Breast epithelium (tissue), 4 donors: ENCODE measurements at regions of chr2 and their contacts with region 1.

Region 1: GRCh38 chr2:73114273-73114867 is 1.6 kb upstream of the RAB11FIP5 start:
- DNase-seq: no peak
- H3K4me3 ChIP-seq: no peak overlapping the region
- H3K27ac ChIP-seq: no peak overlapping the region
- H3K4me1 ChIP-seq: peaks cover 0 to 12% of the 10 kb centered on the region in 2 donors
- H3K27me3 ChIP-seq: no peaks in the 10 kb centered on the region
- CTCF ChIP-seq: no peak
- POLR2A ChIP-seq: no peak

Region 2: DNA sequence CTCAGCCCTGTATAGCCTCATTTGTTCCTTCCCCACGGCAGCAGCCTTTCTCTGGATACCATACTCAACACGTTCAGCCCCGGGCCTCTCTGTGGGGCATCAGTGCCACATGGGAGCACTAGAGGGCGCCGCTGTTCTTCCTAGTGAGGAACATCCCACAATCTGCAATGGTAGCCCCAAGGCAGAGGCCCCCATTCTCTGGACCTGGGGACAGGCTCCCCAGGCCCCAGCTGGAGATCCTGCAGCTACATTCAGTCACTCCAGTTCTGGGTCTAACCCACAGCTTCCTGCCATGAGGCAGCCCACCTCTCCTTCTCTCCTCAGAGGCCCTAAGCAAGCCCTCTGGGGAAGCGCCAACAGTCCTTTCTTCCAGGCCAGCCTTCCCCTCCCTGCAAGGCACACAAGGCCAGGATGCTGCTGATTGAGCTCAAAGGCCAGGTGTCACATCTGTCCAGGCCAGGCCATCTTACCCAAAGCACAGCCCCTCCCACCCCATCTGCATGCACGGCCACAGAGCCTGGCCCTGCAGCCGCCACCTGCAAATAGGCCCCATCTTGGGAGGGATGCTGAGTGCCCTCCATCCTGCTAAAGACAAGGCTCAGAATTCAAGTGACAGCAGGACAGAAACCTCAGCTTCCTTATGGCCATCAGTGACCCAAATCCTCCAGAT is 28.5 kb before region 1 on chr2:
- intact Hi-C with region 1: loop called (anchors 2 kb)
- DNase-seq: peak in 1 of 2 donors; percentile 60
- H3K4me3 ChIP-seq: no peak overlapping the region
- H3K27ac ChIP-seq: no peak overlapping the region
- H3K4me1 ChIP-seq: no peaks in the 10 kb centered on the region
- H3K27me3 ChIP-seq: no peaks in the 10 kb centered on the region
- CTCF ChIP-seq: peak; percentile 30 to 73 (median 67)
- POLR2A ChIP-seq: no peak

Region 3: GRCh38 chr2:73197579-73197978 is 83.2 kb after region 1 on chr2:
- intact Hi-C with region 1: no loop called
- DNase-seq: no peak
- H3K4me3 ChIP-seq: no peak overlapping the region
- H3K27ac ChIP-seq: no peak overlapping the region
- H3K4me1 ChIP-seq: peaks cover 0 to 1% of the 10 kb centered on the region in 2 donors
- H3K27me3 ChIP-seq: peaks cover 0 to 44% of the 10 kb centered on the region in 2 donors
- CTCF ChIP-seq: no peak
- POLR2A ChIP-seq: no peak